ENCODE measurements at regions of chr1 and their contacts with region 1.

Region 1: DNA sequence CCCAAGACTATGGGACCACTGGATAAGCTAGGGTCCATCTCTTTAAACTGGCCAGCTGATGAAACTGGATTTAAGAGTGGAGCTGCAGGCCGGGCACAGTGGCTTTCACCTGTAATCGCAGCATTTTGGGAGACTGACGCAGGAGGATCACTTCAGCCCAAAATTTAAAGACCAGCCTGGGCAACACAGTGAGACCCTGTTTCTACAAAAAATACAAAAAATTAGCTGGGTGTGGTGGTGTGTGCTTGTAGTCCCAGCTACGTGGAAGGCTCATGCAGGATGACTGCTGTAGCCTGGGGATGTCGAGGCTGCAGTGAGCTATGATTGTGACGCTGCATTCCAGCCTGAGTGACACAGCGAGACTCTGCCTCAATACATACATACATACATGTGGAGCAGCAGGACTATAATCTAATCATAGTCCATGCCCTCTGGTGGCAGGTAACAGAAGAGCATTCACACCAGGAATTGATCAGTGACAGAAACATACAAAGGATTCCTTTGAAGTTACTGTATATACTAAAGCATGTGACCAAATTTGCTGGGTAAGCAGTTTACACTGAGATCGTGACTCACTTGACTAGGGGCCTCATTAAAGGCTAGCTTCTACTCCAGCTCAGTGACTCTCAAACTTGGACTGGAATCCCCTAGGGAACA is 101.5 kb upstream of the SLFNL1 start:
- DNase-seq: no peak
- H3K4me3 ChIP-seq: no peak overlapping the region
- H3K27ac ChIP-seq: no peak overlapping the region
- H3K4me1 ChIP-seq: no peaks in the 10 kb centered on the region
- H3K27me3 ChIP-seq: no peaks in the 10 kb centered on the region
- CTCF ChIP-seq: peak in 1 of 3 experiments; percentile 66; a peak in 1 of 4 replicates
- EP300 ChIP-seq: no peak
- POLR2A ChIP-seq: no peak
- RAD21 ChIP-seq: peak in 1 of 2 experiments; percentile 17; a peak in 1 of 4 replicates

Region 2: DNA sequence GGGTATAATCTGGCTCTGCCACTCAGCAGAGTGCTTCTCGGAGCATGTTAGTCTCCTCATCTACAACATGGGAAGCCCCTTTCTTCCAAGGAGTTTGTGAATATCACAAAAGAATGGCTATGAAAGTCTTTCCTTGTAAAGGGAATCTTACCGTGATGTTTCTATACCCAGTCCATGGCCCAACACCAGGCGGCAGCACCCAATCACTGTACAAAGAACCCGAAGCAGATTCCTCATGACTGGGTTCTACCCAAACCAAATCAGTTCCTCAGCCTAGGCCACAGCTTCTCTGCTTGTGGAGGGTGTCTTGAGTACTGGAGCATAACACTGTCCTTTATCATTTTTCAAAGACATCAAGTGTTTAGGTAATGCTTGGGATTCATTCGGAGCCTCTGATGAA is 84.9 kb before region 1 on chr1:
- CTCF ChIA-PET with region 1: interaction called, 12 read pairs
- POLR2A ChIA-PET with region 1: no interaction called
- DNase-seq: no peak
- H3K4me3 ChIP-seq: no peak overlapping the region
- H3K27ac ChIP-seq: no peak overlapping the region
- H3K4me1 ChIP-seq: no peaks in the 10 kb centered on the region; a peak in 2 of 7 replicates
- H3K27me3 ChIP-seq: peaks cover 0 to 3% (median 0%) of the 10 kb centered on the region in 4 experiments; a peak in 1 of 7 replicates
- CTCF ChIP-seq: peak; percentile 11 to 35 (median 26)
- EP300 ChIP-seq: no peak
- POLR2A ChIP-seq: no peak
- RAD21 ChIP-seq: peak; percentile 50 to 52

Region 3: GRCh38 chr1:41109316-41110197 is 13.4 kb before region 1 on chr1:
- CTCF ChIA-PET with region 1: interaction called, 14 read pairs
- POLR2A ChIA-PET with region 1: no interaction called
- DNase-seq: no peak
- H3K4me3 ChIP-seq: no peak overlapping the region
- H3K27ac ChIP-seq: no peak overlapping the region
- H3K4me1 ChIP-seq: peaks cover 0 to 7% (median 0%) of the 10 kb centered on the region in 4 experiments; a peak in 1 of 7 replicates
- H3K27me3 ChIP-seq: no peaks in the 10 kb centered on the region
- CTCF ChIP-seq: no peak
- EP300 ChIP-seq: no peak
- POLR2A ChIP-seq: no peak
- RAD21 ChIP-seq: no peak

Region 4: DNA sequence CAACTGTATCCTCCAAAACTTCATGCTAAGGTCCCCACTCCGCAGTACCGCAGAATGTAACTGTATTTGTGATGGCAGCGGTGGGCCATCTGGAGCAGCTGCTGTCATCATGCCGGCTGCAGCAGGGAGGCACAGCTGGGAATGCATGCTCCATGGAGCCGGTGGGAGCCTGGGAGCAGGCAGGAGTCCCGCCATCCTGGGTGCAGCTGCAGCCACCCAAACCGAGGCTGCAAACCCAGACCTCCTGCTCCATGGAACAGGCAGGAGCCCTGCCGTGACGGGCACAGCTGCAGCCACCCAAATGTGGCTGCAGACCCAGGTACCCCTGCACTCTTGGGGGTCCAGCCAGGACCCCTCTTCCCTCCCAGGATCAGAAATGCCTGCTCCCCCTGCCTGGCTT is 38.9 kb after region 1 on chr1:
- CTCF ChIA-PET with region 1: no interaction called
- POLR2A ChIA-PET with region 1: no interaction called
- DNase-seq: no peak
- H3K4me3 ChIP-seq: no peak overlapping the region
- H3K27ac ChIP-seq: no peak overlapping the region
- H3K4me1 ChIP-seq: no peaks in the 10 kb centered on the region
- H3K27me3 ChIP-seq: no peaks in the 10 kb centered on the region
- CTCF ChIP-seq: no peak
- EP300 ChIP-seq: no peak
- POLR2A ChIP-seq: no peak
- RAD21 ChIP-seq: no peak

Region 5: GRCh38 chr1:41268154-41268770 is 145.3 kb after region 1 on chr1:
- CTCF ChIA-PET with region 1: no interaction called
- POLR2A ChIA-PET with region 1: no interaction called
- DNase-seq: peak; percentile 41 to 92
- H3K4me3 ChIP-seq: no peak overlapping the region
- H3K27ac ChIP-seq: no peak overlapping the region
- H3K4me1 ChIP-seq: no peaks in the 10 kb centered on the region; a peak in 1 of 7 replicates
- H3K27me3 ChIP-seq: no peaks in the 10 kb centered on the region
- CTCF ChIP-seq: peak; percentile 96 to 99 (median 96)
- EP300 ChIP-seq: no peak
- POLR2A ChIP-seq: no peak
- RAD21 ChIP-seq: peak; percentile 99 to 100